ENCODE measurements at regions of chr16 and their contacts with region 1.

Region 1: GRCh38 chr16:83898463-83899271 is at the start of gene MLYCD:
- DNase-seq: peak; percentile 97
- H3K4me3 ChIP-seq: peak within 1 kb of the TSS; percentile 85 to 96 (median 90)
- H3K27ac ChIP-seq: peak within 1 kb of the TSS; percentile 92 to 99 (median 98)
- H3K4me1 ChIP-seq: peaks cover 31 to 51% (median 48%) of the 10 kb centered on the region in 4 donors
- H3K27me3 ChIP-seq: no peaks in the 10 kb centered on the region
- CTCF ChIP-seq: no peak
- EP300 ChIP-seq: peak; percentile 53
- POLR2A ChIP-seq: peak; percentile 1
- total RNA-seq, gene MLYCD: 9.6 to 15.8 (median 12.3) TPM

Region 2: DNA sequence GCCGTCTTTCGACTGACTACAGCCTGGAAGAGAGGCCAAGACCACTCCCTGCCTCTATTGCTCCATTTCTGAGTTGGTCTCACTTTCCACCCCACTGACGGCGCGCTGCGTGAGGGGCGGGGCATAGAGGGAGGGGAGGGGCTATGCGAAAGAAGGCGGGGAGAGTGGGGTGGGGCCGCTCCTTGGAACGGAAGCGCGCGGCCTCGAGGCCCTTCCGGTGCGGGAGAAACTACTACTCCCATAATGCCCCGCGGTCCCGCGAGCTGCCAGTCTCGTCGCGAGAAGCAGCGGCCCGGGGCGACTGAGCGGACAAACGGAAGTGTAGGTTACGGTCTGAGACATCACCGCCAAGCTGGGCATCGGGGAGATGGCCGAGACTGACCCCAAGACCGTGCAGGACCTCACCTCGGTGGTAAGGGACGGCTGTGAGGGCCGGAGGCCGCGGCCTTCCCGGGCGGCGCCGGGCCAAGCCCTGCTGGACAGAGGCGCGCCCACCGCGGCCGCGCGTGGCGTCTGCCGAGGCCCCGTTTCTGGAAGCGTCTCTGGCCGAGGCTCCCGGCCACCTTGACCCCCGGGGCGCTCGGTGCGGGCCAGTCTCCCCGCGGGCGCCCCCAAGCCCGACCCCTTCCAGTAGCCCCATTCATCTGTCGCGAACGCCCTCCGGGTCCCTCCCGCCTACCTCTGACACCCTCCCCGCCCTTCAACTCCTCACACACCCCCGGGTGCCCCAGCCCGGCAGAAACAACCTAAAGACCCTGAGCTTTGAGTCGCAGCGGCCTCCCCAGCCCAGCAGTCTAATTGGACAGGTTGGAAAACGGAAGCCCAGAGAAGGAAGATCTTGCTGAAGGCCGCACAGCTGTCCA is 90.7 kb before region 1 on chr16 and contains the start of gene HSBP1:
- intact Hi-C with region 1: loop called (anchors 5 kb)
- DNase-seq: peak; percentile 99
- H3K4me3 ChIP-seq: peak within 1 kb of the TSS; percentile 90 to 95 (median 90)
- H3K27ac ChIP-seq: peak within 1 kb of the TSS; percentile 81 to 87 (median 85)
- H3K4me1 ChIP-seq: peaks cover 37 to 50% (median 39%) of the 10 kb centered on the region in 4 donors
- H3K27me3 ChIP-seq: no peaks in the 10 kb centered on the region
- CTCF ChIP-seq: peak in 2 of 3 experiments; percentile 10 to 19
- EP300 ChIP-seq: no peak
- POLR2A ChIP-seq: no peak
- total RNA-seq, gene HSBP1: 12.0 to 49.8 (median 26.4) TPM